ENCODE measurements at regions of chr10 and their contacts with region 1.

Region 1: DNA sequence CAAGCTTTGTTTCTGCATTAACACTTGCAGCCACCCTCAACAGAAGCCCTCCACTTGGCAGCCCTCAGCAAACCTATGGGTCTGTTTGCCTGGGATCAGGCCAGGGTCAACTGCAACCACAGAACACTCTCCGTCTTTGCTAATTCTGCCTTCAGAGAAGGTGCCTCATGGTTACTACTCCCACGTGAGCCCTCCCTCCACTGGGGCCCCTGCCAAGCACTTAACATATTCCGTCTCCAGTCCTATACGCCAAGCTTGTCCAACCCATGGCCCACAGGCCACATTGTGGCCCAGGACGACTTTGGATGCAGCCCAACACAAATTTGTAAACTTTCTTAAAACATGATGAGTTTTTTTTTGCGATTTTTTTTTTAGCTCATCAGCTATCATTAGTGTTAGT is 54.7 kb downstream of the HSPA12A start:
- DNase-seq: no peak

Region 2: DNA sequence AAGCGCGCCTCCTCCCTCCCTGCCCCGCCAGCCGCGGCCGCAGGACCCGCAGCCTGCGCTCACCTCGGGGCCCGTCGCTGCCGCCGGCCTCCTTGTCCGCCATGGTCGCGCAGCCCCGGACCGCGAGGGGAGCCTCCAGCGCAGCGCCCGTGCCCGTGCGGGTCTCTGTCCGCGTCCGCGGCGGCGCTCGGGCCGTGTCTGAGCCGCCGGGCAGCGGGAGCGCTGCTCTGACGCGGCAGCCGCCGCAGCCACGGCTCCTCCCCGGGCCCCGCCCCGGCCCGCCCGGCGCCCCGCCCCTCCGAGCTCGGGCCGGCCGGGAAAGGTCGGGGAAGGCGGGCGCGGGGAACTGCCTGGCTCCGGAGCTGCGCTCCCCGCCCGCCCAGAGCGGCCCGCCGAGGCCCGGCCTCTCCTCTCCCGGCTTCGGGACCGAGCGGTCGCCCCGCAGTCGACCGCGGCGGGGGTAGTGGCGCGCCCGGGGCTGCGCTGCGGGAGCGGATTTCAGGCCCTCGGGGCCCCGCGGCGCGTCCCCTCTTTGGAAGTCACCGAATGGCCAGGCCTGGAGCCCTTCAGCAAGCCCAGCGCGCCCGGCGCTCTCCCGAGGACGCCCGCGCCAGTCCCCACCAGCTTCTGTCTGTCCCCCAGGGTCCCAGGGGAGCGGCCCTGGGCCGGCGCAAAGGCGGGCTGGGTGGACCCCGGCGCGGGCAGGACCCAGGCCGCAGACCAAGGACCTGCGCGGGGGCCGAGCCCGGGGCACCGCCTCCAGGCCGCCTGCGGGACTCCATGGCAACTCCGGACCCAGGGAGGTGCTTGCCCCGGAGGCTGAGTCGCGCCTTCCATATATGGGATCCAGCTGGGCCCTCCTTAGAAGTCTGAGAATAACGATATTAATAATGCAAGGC is 55.0 kb after region 1 on chr10 and contains the start of gene HSPA12A:
- intact Hi-C with region 1: loop called (anchors 2 kb)
- DNase-seq: peak; percentile 85
- total RNA-seq, gene HSPA12A: 8.1 TPM

Region 3: GRCh38 chr10:116787893-116788665 is 100.4 kb after region 1 on chr10:
- intact Hi-C with region 1: loop called (anchors 1 kb)
- DNase-seq: peak; percentile 83

Region 4: DNA sequence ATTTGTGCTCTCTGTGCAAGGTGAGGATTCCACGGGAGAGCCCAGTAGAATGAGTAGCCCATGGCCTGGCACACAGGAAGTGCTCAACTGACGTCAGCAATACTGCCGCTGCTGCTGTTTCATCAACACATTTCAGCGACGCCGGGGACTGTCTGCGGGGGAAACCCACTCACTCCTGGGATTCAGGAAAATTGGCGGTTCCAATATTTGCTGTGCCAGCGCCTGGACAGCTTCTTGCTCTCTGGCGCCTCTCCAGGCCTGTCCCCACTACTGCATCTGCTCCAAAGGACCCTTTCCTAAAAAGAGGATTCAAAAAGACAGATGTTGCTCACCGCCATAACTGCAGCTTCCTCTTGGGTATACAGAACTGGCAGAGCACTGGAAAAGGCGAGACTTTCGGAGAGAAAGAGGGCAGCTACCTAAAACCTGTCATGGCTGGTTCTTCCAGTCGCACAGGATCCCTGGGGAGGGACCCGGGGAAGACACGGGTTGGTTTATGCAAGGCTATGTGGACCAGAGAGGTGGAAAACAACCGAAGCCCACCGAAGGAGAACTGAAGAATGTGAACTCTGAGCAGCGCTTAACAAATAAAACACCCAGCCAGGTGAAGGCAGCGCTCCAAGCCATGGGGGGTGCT is 122.0 kb after region 1 on chr10:
- intact Hi-C with region 1: no loop called
- DNase-seq: peak; percentile 38

Region 5: GRCh38 chr10:117167789-117168674 is 480.4 kb after region 1 on chr10:
- intact Hi-C with region 1: loop called (anchors 5 kb)
- DNase-seq: peak; percentile 82